ENCODE measurements at regions of chr14 and their contacts with region 1.

Region 1: DNA sequence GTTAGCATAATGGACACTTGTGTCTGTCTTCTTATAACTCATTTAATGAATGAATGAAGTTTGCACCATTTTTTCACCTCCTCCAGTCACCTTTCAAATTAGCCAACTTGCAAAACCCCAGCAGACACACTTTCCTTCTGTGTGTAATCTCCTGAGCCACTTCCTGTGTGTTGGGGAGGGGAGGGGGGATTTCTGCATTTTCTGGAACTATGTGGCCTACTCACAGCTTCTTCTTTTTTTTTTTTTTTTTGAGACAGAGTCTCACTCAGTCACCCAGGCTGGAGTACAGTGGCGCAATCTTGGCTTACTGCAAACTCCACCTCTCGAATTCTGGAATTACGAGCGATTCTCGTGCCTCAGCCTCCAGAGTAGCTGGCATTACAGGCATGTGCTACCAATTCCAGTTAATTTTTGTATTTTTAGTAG is 4.1 kb upstream of the SERPINA1 start:
- DNase-seq: peak; percentile 33
- H3K4me3 Mint-ChIP-seq: no peak overlapping the region
- H3K27ac Mint-ChIP-seq: no peak overlapping the region
- H3K4me1 Mint-ChIP-seq: peaks cover 45% of the 10 kb centered on the region
- H3K27me3 Mint-ChIP-seq: no peaks in the 10 kb centered on the region

Region 2: DNA sequence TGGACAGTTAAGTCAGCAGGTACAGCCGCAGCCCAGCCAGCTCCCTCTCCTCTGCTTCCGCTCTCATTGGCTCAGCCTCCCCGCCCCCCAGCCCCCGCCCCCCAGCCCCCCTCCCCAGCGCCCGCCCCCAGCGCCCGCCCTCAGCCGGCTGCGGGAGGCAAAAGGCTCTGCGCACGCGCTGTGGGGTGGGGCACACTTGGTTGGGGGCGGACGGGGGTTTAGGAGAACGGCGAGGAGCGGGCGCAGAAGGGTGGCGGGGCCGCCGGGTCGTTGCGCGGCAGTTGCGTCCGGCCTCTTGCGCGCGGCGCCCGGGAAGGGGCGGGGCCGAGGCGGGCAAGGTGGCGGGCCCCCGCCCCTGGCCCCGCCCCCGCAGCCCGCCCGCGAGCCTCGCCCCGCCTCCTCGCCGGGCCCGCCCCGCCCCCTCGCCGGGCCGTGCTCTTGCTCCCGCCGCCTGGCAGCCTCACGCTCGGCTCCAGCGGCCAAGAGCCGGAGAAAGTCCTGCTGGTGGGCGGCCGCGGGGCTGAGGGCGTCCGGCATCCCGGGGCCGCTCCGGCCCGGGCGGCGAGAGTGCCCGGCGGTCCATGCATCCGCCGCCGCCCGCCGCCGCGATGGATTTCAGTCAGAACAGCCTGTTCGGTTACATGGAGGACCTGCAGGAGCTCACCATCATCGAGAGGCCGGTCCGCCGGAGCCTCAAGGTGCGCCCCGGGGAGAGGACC is 218.5 kb before region 1 on chr14 and contains the start of gene PPP4R4:
- intact Hi-C with region 1: loop called (anchors 10 kb)
- DNase-seq: peak; percentile 89
- H3K4me3 Mint-ChIP-seq: peak within 1 kb of the TSS; percentile 78
- H3K27ac Mint-ChIP-seq: no peak within 1 kb of the TSS
- H3K4me1 Mint-ChIP-seq: peaks cover 21% of the 10 kb centered on the region
- H3K27me3 Mint-ChIP-seq: peaks cover 57% of the 10 kb centered on the region
- total RNA-seq, gene PPP4R4: 1.2 and 1.8 TPM in 2 replicates

Region 3: GRCh38 chr14:94345337-94346064 is 47.0 kb before region 1 on chr14:
- intact Hi-C with region 1: loop called (anchors 2 kb)
- DNase-seq: no peak
- H3K4me3 Mint-ChIP-seq: no peak overlapping the region
- H3K27ac Mint-ChIP-seq: no peak overlapping the region
- H3K4me1 Mint-ChIP-seq: peaks cover 25% of the 10 kb centered on the region
- H3K27me3 Mint-ChIP-seq: no peaks in the 10 kb centered on the region

Region 4: DNA sequence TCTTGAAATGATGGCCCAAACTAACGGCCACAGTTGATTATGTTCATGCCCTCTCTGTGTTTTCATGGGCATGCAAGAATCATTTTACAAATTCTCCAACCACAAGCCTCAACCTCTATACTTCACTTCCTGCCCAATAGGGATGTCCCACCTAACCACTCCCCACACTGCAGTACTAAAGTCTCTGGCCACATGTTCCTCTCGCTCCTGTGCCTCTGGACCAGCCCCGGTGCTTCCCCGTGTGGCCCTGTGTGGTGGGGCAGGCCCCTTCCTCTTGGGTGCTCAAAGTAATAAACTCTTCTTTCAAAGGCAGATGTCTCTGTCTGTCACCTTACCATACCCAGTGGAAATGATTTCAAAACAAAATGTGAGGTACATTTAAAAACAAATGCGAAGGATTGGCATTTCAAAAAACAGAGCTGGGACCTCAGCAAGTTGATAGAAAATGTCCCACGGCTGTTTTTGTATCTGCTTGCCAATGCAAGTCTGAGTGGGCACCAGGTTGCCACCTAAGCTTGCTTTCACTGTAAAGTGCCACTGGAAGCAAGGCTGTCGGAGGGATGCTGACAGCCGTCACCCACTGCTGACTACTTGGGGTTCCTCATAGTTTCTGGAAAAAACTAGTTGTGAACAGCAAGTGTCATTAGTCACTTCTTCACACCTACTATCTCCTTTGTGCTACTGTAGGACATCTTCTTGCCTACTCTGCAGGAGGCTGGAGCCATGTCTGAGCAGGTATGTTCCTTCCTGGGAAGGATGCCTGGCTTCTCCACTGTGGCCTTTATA is 68.3 kb after region 1 on chr14:
- intact Hi-C with region 1: no loop called
- DNase-seq: no peak
- H3K4me3 Mint-ChIP-seq: no peak overlapping the region
- H3K27ac Mint-ChIP-seq: no peak overlapping the region
- H3K4me1 Mint-ChIP-seq: no peaks in the 10 kb centered on the region
- H3K27me3 Mint-ChIP-seq: peaks cover 2% of the 10 kb centered on the region

Region 5: GRCh38 chr14:94622653-94623421 is 230.3 kb after region 1 on chr14:
- intact Hi-C with region 1: no loop called
- DNase-seq: no peak
- H3K4me3 Mint-ChIP-seq: no peak overlapping the region
- H3K27ac Mint-ChIP-seq: no peak overlapping the region
- H3K4me1 Mint-ChIP-seq: no peaks in the 10 kb centered on the region
- H3K27me3 Mint-ChIP-seq: no peaks in the 10 kb centered on the region